Vagina (tissue), 2 donors: ENCODE measurements at regions of chr12 and their contacts with region 1.

Region 1: DNA sequence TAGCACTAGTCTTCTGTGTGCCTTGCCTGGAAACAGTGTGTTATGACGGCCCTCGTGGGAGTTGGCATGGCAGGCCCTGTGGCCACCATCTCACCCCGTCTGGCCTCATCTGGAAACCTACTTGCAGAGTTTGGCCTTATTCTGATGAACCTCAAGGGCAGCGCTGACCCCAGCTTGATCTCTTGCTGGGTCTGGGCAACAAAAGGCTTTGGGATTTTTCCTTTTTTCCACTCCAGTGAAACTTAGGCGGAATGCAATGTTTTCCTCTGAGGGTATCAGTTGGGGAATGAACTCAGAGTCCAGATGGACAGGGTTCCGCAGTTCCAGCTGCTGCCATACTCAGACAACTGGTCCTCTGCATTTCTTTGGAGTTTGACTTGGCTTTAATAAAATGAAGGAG is 15.9 kb downstream of the CACNA1C start:
- DNase-seq: no peak
- H3K4me3 ChIP-seq: no peak overlapping the region
- H3K27ac ChIP-seq: no peak overlapping the region
- H3K4me1 ChIP-seq: peaks cover 13% of the 10 kb centered on the region
- H3K27me3 ChIP-seq: no peaks in the 10 kb centered on the region
- CTCF ChIP-seq: no peak
- POLR2A ChIP-seq: no peak

Region 2: GRCh38 chr12:2034633-2035430 is 33.8 kb before region 1 on chr12:
- intact Hi-C with region 1: no loop called
- DNase-seq: no peak
- H3K4me3 ChIP-seq: peak overlapping the region; percentile 30 to 39
- H3K27ac ChIP-seq: no peak overlapping the region
- H3K4me1 ChIP-seq: peaks cover 11% of the 10 kb centered on the region
- H3K27me3 ChIP-seq: no peaks in the 10 kb centered on the region
- CTCF ChIP-seq: peak; percentile 83 to 89 (median 88)
- POLR2A ChIP-seq: no peak

Region 3: DNA sequence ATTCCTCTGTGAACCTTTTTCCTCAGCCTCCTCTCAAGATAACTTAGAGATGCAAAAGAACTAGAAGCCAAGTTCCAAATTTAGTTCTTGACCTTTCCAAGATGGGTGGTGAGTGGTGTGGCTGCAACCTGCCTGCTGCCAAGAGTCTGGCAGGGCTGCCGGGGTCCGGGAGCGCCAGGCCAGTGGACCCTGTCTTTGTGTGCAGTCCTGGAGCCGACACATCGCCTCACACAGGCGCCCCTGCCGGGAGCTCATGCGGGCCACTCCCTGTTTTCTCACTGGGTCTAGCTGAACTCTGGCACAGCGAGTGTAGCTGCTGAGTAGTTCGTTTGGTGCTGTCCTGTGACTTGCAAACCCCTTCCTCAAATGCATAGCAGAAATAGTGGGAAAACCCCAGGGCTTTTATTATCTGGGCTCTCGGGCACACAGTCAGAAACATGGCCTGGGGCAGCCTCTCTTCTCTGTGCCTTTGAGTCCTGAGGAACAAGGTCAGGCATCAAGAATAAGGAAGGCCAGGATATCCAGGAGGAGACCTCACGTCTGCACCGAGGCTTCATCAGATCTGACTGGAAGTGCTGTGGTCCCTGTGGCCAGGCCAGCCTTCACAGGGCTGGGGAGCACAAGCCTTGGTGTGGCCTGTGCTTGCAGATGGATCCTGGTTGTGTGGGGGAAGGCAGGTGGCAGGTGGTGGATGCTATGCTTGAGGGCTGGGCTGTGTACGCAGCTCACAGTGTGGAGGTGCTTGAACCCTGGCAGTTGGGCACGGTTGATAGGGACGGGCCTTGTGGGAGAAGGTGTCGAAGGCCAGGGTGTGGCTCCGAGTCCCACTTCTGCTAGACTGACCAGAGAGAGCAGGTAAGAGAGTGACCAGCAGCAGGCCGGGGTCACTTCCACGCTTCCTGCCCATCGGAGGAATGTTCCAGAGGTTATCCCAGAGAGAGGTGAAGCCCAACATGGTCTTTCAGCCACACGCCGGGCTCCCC is 69.3 kb after region 1 on chr12:
- intact Hi-C with region 1: loop called (anchors 5 kb)
- DNase-seq: no peak
- H3K4me3 ChIP-seq: no peak overlapping the region
- H3K27ac ChIP-seq: no peak overlapping the region
- H3K4me1 ChIP-seq: no peaks in the 10 kb centered on the region
- H3K27me3 ChIP-seq: no peaks in the 10 kb centered on the region
- CTCF ChIP-seq: no peak
- POLR2A ChIP-seq: no peak